GM12878 (cell line): ENCODE measurements at regions of chr16 and their contacts with region 1.

Region 1: GRCh38 chr16:49407873-49408550 is 34.4 kb downstream of the C16orf78 start:
- DNase-seq: peak; percentile 64
- ATAC-seq: peak; percentile 99
- H3K4me3 ChIP-seq: no peak overlapping the region
- H3K27ac ChIP-seq: no peak overlapping the region
- H3K4me1 ChIP-seq: peaks cover 4% of the 10 kb centered on the region; the same call in 1 of the 2 replicates
- H3K27me3 ChIP-seq: no peaks in the 10 kb centered on the region
- CTCF ChIP-seq: peak; percentile 84 to 89 (median 88)
- EP300 ChIP-seq: no peak
- POLR2A ChIP-seq: no peak
- RAD21 ChIP-seq: peak; percentile 95

Region 2: DNA sequence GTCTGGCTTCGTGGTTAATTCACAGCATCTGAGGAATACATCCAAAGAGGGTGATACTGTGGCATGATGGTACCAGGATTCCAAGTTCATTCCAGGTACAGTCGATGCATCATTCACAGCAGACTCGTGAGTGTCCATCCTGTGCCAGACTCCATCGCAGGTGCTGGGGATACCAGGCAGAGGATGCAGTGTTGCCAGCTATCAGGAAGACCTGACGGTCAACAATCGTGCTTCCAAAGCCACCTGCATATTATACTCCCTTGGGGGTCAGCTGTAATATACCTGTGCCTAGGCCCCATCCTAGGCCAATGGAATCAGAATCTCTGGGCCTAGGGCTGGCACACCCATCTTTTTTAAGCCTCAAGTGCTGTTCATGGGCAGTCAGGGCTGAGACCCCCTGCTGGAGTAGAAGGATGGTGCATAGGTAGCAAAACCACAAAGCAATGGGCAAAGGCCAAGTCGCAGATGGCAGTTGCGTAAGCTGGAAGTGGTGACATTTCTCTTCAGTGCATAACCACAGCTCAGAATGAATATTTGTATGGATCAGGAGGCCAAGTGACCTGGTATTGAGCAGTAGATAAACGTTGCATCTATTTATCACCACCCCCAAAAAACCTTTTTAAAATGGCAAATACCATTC is 77.3 kb before region 1 on chr16:
- CTCF ChIA-PET with region 1: no interaction called
- POLR2A ChIA-PET with region 1: no interaction called
- RAD21 ChIA-PET with region 1: no interaction called
- SMC1A ChIA-PET with region 1: no interaction called
- in situ Hi-C with region 1: no loop called
- intact Hi-C with region 1: no loop called
- DNase-seq: no peak
- ATAC-seq: no peak
- H3K4me3 ChIP-seq: no peak overlapping the region
- H3K27ac ChIP-seq: no peak overlapping the region
- H3K4me1 ChIP-seq: no peaks in the 10 kb centered on the region
- H3K27me3 ChIP-seq: peaks cover 0 to 2% of the 10 kb centered on the region in 2 experiments; a peak in 1 of 4 replicates
- CTCF ChIP-seq: no peak
- EP300 ChIP-seq: no peak
- POLR2A ChIP-seq: no peak
- RAD21 ChIP-seq: no peak

Region 3: DNA sequence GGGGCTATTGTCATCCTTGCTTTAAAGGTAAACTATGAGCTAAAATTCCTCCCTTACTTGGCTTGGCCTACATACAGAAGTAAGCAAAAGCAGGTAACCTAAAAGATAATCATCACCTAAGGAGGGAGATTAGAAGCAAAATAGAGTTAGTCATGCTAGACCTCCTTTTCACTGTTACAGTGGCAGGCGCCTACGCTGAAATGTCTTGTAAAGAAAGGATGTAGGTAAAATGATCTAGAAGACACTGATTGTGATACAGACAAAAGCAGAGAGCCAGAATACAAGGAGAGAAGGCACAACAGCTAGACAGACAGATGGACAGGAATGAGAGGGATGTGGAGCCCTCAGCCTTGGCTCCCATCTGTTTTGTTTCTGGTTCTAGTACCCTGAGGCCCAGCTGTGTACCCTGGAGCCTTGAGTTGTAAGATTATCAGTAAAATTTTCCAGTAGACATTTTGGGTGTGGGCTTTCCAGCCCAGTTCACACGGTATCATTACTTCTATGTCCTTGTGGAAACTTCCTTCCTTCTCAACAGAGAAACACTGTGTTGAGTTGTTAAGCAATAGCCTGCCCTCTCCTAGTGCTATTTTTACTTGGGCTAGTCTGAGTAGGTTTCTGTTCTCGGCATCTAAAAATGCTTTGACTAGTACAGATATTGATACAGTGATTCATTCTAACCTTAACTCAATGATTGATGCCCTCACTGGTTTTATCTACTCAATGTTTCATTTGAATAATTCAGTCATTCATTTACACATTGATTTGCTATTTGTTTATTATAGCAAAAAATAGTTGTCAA is 42.1 kb before region 1 on chr16:
- CTCF ChIA-PET with region 1: no interaction called
- POLR2A ChIA-PET with region 1: no interaction called
- RAD21 ChIA-PET with region 1: no interaction called
- SMC1A ChIA-PET with region 1: no interaction called
- in situ Hi-C with region 1: no loop called
- intact Hi-C with region 1: no loop called
- DNase-seq: peak; percentile 67
- ATAC-seq: peak; percentile 84
- H3K4me3 ChIP-seq: no peak overlapping the region
- H3K27ac ChIP-seq: peak overlapping the region; percentile 28
- H3K4me1 ChIP-seq: peaks cover 23% of the 10 kb centered on the region
- H3K27me3 ChIP-seq: no peaks in the 10 kb centered on the region
- CTCF ChIP-seq: no peak
- EP300 ChIP-seq: no peak
- POLR2A ChIP-seq: no peak
- RAD21 ChIP-seq: no peak

Region 4: GRCh38 chr16:49921791-49922456 is 513.9 kb after region 1 on chr16:
- CTCF ChIA-PET with region 1: interaction called, 3 read pairs
- POLR2A ChIA-PET with region 1: no interaction called
- RAD21 ChIA-PET with region 1: no interaction called
- SMC1A ChIA-PET with region 1: interaction called, 3 read pairs
- in situ Hi-C with region 1: no loop called
- intact Hi-C with region 1: loop called (anchors 5 kb)
- DNase-seq: no peak
- ATAC-seq: peak; percentile 85
- H3K4me3 ChIP-seq: no peak overlapping the region
- H3K27ac ChIP-seq: no peak overlapping the region
- H3K4me1 ChIP-seq: no peaks in the 10 kb centered on the region; the same call in 1 of the 2 replicates
- H3K27me3 ChIP-seq: no peaks in the 10 kb centered on the region
- CTCF ChIP-seq: peak; percentile 54 to 64 (median 61)
- EP300 ChIP-seq: no peak
- POLR2A ChIP-seq: no peak
- RAD21 ChIP-seq: peak; percentile 76